ENCODE measurements at regions of chr14 and their contacts with region 1.

Region 1: GRCh38 chr14:23068476-23069412 is 11.4 kb upstream of the CDH24 start:
- DNase-seq: peak; percentile 80
- H3K4me3 ChIP-seq: peak overlapping the region; percentile 49
- H3K27ac ChIP-seq: no peak overlapping the region
- H3K27me3 ChIP-seq: no peaks in the 10 kb centered on the region
- CTCF ChIP-seq: peak; percentile 100

Region 2: GRCh38 chr14:21825149-21825743 is 1243.5 kb before region 1 on chr14:
- CTCF ChIA-PET with region 1: no interaction called
- POLR2A ChIA-PET with region 1: no interaction called
- DNase-seq: no peak
- H3K4me3 ChIP-seq: no peak overlapping the region
- H3K27ac ChIP-seq: no peak overlapping the region
- H3K27me3 ChIP-seq: no peaks in the 10 kb centered on the region
- CTCF ChIP-seq: 0 out of 2 replicates have a peak, but pooled peaks have one; percentile 14

Region 3: DNA sequence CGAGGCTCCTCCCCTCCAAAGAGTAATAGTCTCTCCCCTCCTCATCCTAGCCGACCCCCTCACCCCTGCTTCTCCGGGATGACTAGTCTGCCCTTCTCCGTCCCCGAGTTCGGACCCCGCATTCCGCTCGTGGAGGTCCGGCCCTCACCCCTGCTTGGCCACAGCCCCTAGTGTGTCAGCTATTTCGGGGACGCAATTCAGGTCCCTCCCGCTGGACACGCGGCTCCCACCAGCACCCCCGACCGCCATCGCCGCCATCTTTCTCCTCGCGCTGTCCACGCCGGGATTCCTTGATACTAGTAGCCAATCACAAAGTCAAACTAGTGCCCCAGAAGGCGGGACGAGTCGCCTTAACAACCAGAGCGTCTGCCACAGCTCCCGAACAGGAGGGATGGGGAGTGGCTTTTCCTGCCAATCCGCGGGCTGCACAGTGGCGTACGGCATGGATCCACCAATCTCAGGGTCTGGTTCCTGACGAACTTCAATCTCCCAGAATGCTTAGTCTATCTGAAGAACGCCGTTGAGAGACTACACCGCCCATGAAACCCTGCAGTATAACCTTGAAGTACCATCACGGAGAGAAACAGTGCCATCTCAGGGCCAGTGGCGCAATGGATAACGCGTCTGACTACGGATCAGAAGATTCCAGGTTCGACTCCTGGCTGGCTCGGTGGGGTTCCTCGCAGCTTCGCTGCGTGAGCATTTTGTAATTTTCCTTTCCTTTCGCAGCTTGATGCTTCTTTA is 139.5 kb before region 1 on chr14 and contains the start of gene PRMT5:
- CTCF ChIA-PET with region 1: interaction called, 13 read pairs
- POLR2A ChIA-PET with region 1: no interaction called
- DNase-seq: peak; percentile 99
- H3K4me3 ChIP-seq: peak within 1 kb of the TSS; percentile 100
- H3K27ac ChIP-seq: peak within 1 kb of the TSS; percentile 71
- H3K27me3 ChIP-seq: no peaks in the 10 kb centered on the region
- CTCF ChIP-seq: no peak
- polyA plus RNA-seq, gene PRMT5: 125 and 133 TPM in 2 replicates

Region 4: DNA sequence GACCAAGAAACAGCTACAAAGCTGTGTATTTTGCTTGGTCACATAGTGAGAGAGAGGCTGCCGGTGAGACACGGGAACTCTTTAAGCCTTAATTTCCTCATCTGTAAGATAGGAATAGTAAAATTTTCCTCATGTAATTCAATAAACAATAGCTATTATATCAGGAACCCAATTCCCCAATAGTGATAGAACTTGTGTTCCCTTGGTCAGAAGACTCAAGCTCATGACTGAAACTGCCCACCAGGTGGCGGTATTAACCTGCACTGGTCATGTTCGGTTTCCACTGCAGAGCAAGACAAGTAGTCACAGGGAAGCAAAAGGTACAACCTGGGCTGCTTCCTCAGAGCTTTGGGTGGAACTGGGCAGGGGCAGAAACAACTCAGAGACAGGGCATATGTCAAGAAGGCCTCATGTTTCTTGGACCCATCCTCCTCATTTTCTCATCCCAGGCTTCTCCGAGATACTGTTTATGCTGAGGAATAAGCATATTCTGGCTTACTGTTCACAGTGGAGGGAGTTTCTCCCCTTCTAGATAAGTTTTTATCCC is 82.2 kb before region 1 on chr14:
- CTCF ChIA-PET with region 1: interaction called, 55 read pairs
- POLR2A ChIA-PET with region 1: interaction called, 3 read pairs
- DNase-seq: peak; percentile 75
- H3K4me3 ChIP-seq: no peak overlapping the region
- H3K27ac ChIP-seq: no peak overlapping the region
- H3K27me3 ChIP-seq: no peaks in the 10 kb centered on the region
- CTCF ChIP-seq: peak; percentile 90

Region 5: DNA sequence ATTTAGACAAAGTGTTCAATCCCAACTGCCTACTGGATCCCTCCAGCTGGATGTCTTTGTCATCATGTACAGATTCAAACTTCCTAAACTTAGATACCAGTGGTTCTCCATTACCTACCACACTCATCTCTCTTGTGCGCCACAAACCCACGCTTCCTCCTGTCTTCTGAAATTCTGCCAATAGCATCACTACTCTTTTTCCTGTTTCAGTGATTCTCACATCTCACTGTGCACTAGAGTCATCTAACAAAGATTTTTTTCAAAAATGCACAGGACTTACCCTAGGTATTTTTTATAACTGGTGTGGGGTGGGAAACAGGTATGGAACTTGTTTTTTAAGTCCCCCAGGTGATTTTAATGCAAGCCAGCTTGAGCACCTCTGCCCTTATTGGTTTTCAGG is 39.9 kb before region 1 on chr14:
- CTCF ChIA-PET with region 1: interaction called, 12 read pairs
- POLR2A ChIA-PET with region 1: no interaction called
- DNase-seq: no peak
- H3K4me3 ChIP-seq: no peak overlapping the region
- H3K27ac ChIP-seq: no peak overlapping the region
- H3K27me3 ChIP-seq: no peaks in the 10 kb centered on the region
- CTCF ChIP-seq: no peak

Region 6: DNA sequence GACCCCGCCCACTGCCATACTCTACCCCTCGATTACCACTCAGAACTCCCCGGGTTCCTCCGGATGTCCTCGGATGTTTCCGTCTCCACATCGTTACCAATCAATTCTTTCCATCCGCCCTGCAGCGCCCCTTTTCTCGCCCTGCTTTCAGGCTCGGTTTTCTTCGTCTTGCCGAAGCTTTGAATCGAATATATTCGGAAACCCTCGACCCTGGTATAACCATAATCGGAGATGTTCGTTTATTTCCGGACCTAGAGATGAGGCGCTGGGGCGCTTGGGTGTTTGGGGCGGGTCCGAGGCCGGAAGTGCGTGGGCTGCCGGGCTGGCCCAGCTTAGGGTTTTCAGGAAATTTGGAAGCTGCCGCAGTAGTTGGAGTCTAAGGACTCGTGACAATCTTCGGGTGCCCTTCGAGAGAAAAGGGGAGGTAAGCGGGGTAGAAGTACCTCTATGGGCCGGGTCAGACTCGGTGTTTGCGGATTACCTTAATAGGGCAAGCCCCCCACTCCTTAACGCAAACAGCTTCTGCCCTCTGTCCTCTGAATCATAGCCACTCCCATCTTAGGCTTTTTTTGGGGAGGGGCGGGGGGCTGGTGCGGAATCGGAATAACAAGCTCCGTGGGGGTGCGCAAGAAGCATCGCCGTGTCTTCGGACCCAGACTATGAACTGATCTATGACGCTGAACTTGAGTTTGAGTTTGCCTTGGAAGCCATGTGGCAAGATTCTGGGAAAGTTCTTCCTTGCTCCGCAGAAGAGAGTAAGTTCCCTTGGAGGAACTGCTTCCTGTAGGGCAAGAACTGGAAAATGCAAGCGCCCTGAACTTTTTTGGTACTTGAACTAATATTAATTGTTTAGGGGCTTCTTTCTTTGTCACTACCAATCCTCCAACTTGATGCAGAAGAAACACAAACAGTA is 26.7 kb after region 1 on chr14 and contains the start of gene C14orf119:
- CTCF ChIA-PET with region 1: interaction called, 317 read pairs
- POLR2A ChIA-PET with region 1: interaction called, 28 read pairs
- DNase-seq: peak; percentile 99
- H3K4me3 ChIP-seq: peak within 1 kb of the TSS; percentile 95
- H3K27ac ChIP-seq: peak within 1 kb of the TSS; percentile 99
- H3K27me3 ChIP-seq: no peaks in the 10 kb centered on the region
- CTCF ChIP-seq: no peak
- polyA plus RNA-seq, gene C14orf119: 119 and 128 TPM in 2 replicates

Region 7: DNA sequence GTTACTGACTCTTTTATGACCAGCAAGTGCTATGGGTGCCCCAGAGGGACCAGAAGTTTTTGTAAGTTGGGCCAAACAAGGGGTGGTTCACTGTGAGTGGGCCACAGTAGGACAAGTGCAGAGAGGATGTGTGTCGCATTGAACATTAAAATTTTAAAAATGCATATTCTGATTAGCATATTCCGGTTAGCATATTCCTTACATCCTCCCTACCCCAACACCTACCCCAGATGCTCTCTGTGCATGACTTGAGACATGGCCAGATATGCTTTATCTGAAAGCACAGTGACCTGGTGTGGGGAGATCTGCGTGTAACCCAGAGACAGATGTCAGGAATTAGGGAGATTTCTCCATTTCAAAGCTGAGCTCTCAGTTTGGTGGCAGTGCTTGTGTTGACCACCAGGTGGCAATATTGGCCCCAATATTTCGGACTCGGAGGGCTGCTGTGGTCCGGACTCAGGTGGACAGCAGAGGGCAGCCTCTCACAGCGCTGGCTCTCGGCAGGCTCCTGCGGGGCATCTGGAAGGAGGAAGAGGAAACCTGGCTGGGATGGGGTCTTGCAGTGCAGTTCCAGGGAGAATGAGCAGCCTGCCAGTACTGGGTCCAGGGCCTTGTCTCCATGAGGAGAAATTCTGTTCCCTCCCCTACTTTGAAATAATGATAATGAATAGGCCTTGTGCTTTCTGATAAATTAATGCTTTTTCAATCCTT is 52.0 kb after region 1 on chr14:
- CTCF ChIA-PET with region 1: interaction called, 19 read pairs
- POLR2A ChIA-PET with region 1: no interaction called
- DNase-seq: peak; percentile 65
- H3K4me3 ChIP-seq: no peak overlapping the region
- H3K27ac ChIP-seq: no peak overlapping the region
- H3K27me3 ChIP-seq: peaks cover 3% of the 10 kb centered on the region
- CTCF ChIP-seq: peak; percentile 100